ENCODE measurements at regions of chr12 and their contacts with region 1.

Region 1: DNA sequence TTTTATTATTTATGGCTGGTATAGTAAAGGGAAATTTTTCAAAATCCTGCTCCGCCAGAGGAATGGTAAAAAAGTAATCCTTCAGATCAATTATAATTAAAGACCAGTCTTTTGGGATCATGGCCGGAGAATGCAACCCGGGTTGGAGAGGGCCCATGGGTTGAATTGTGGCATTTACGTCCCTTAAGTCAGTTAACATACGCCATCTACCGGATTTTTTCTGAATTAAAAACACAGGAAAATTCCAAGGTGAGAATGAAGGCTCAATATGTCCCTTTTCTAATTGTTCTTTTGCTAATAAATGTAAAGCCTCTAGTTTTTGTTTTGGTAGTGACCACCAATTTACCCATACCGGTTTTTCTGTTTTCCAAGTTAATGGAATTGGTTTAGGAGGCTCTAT is 602.8 kb downstream of the ALG10 start:
- DNase-seq: peak; percentile 30
- H3K4me3 ChIP-seq: no peak overlapping the region
- H3K27ac ChIP-seq: no peak overlapping the region
- H3K4me1 ChIP-seq: no peaks in the 10 kb centered on the region
- H3K27me3 ChIP-seq: no peaks in the 10 kb centered on the region
- CTCF ChIP-seq: peak; percentile 47

Region 2: GRCh38 chr12:34048714-34049113 is 576.4 kb before region 1 on chr12:
- CTCF ChIA-PET with region 1: no interaction called
- POLR2A ChIA-PET with region 1: no interaction called
- intact Hi-C with region 1: loop called (anchors 5 kb)
- DNase-seq: no peak
- H3K4me3 ChIP-seq: no peak overlapping the region
- H3K27ac ChIP-seq: no peak overlapping the region
- H3K4me1 ChIP-seq: no peaks in the 10 kb centered on the region
- H3K27me3 ChIP-seq: no peaks in the 10 kb centered on the region
- CTCF ChIP-seq: no peak

Region 3: DNA sequence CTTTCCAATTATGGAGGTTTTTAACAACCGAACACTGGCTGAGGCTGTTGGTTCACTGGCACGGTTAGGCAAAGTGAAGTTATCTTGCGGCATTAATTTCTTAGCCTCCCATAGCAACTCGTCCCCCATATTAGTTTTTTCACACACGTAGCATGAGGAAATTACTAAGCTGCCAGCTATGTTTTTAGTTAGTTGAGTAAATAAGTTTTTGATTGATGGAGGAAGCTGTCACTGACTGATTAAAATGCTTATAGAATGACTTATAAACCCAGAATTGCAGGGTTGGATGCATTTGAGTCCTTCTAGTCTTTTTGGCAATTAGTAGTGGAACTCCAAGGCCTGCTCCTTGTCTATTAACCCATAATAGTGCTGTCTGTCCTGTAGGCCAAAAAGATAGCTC is 505.8 kb before region 1 on chr12:
- CTCF ChIA-PET with region 1: interaction called, 3 read pairs
- POLR2A ChIA-PET with region 1: no interaction called
- intact Hi-C with region 1: loop called (anchors 2 kb)
- DNase-seq: no peak
- H3K4me3 ChIP-seq: no peak overlapping the region
- H3K27ac ChIP-seq: no peak overlapping the region
- H3K4me1 ChIP-seq: no peaks in the 10 kb centered on the region
- H3K27me3 ChIP-seq: no peaks in the 10 kb centered on the region
- CTCF ChIP-seq: no peak